ENCODE measurements at regions of chr12 and their contacts with region 1.

Region 1: DNA sequence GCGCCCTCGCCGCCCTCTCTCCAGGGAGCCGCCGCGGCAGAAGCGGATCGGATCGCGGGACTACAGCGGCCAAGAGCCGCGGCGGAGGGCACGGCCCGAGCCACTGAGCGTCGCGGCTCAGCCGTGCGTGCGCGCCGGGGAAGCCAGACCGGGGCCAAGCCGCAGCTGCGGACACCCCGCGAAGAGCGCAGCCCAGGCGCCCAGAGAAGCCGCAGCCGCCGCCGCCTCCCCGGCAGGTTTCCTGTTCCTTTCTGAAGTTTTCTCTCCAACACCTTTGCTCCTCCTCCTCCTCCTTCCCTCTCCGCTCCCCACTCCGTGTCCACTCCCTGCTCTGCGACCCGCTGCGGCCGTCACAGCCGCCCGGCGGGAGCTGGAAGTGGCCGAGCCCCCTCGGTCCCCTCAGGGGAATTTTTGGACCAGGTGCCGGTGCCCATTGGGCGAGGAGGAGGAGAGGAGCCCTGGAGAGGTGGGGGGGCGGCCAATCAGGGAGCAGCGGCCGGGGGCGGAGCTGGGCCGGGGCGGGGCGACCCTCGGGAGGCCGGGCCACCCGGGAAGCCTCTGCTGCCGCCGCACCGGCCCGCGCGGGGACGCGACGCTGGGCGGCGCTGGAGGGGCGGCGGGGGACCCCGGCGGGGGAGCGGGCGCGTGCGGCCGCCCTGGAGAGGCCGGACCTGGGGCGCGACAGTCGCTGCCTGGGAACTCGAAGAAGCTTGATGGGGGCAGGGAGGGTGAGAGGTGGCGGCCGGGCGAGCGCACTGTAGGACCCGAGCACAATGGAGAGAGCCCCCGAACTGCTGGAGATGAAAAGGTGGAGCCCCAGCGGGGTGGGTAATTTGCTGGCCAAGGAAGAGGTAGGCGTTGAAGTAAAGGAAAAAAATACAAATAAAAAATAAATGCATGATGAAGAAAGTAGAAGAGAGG is at the start of gene ITPR2:
- DNase-seq: no peak
- H3K4me3 ChIP-seq: peak within 1 kb of the TSS; percentile 87
- CTCF ChIP-seq: no peak

Region 2: DNA sequence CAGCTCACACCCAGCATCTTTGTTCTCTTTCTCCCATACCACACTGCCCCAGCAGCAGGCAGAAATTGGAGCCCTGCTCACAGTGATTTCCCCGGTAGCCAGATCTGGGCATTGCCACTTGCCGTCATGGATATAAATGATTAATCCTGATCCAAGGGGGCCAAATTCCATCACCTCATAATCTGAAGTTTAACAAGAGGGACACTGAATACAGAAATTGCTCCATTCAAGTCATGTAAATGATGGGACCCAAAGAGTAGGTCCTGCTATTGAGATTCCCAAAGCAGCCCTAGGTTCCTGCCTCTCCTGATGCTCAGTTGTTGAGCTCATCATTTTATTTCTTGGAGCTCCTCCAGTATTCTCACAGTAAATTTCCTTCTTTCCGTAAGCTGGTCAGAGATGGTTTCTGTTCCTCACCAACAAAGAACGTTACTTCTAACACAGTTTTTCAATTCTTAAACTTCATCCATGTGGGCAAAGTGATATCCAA is 11.8 kb before region 1 on chr12:
- CTCF ChIA-PET with region 1: interaction called, 16 read pairs
- POLR2A ChIA-PET with region 1: interaction called, 10 read pairs
- DNase-seq: no peak
- H3K4me3 ChIP-seq: no peak overlapping the region
- CTCF ChIP-seq: no peak

Region 3: GRCh38 chr12:26845057-26845666 is 12.1 kb after region 1 on chr12:
- CTCF ChIA-PET with region 1: interaction called, 54 read pairs
- POLR2A ChIA-PET with region 1: no interaction called
- DNase-seq: no peak
- H3K4me3 ChIP-seq: no peak overlapping the region
- CTCF ChIP-seq: peak; percentile 62